Naive thymus-derived CD4-positive, alpha-beta T cell (primary cell): ENCODE measurements at regions of chr4 and their contacts with region 1.

Region 1: GRCh38 chr4:123580981-123581664 is 184.5 kb downstream of the SPRY1 start:
- DNase-seq: no peak
- ATAC-seq: no peak
- H3K4me3 ChIP-seq: no peak overlapping the region
- H3K4me3 Mint-ChIP-seq: no peak overlapping the region
- H3K27ac ChIP-seq: no peak overlapping the region
- H3K27ac Mint-ChIP-seq: no peak overlapping the region
- H3K4me1 ChIP-seq: no peaks in the 10 kb centered on the region
- H3K4me1 Mint-ChIP-seq: no peaks in the 10 kb centered on the region
- H3K27me3 ChIP-seq: no peaks in the 10 kb centered on the region
- H3K27me3 Mint-ChIP-seq: peaks cover 0 to 13% (median 0%) of the 10 kb centered on the region in 5 donors

Region 2: DNA sequence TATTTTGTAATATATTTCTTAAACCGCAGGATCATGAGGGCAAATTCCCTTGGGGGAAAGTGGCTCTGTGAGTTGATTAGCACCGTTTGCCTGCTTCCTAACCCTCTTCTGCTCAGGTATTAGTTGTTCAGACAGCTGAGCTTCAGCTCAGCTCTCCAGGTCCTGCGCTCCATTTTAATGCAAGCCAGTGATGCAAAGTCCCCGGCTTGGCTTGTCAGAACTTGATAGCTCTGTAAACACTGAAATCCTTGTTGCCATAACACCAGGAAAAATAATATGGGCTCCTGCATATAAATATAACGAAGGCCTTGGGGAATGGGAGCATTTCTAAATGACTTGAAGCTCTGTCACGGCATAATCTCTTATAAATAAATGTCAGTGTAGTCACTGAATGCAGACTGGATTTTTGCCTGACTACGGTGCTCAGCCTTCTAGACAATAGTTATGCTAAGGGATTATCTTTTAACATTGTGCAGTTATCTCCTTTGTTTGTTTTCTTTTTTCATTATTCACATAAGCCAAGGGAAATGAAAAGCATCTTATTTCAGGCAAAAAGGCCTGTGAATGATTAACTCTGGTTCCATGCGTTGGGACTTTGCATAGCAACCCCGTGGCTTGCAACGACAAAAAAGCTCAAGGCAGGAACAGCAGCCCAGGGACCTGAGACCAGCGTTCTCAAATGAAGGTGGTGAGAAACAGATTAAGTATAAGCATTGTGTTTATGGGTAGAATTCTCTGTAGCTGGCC is 68.7 kb after region 1 on chr4:
- CTCF ChIA-PET with region 1: no interaction called
- POLR2A ChIA-PET with region 1: no interaction called
- intact Hi-C with region 1: loop called in 1 of 2 experiments (anchors 5 kb)
- DNase-seq: no peak
- ATAC-seq: no peak
- H3K4me3 ChIP-seq: no peak overlapping the region
- H3K4me3 Mint-ChIP-seq: no peak overlapping the region
- H3K27ac ChIP-seq: no peak overlapping the region
- H3K27ac Mint-ChIP-seq: no peak overlapping the region
- H3K4me1 ChIP-seq: no peaks in the 10 kb centered on the region
- H3K4me1 Mint-ChIP-seq: peaks cover 0 to 2% (median 0%) of the 10 kb centered on the region in 7 donors
- H3K27me3 ChIP-seq: no peaks in the 10 kb centered on the region
- H3K27me3 Mint-ChIP-seq: peaks cover 0 to 14% (median 3%) of the 10 kb centered on the region in 5 donors